ENCODE measurements at regions of chr16 and their contacts with region 1.

Region 1: DNA sequence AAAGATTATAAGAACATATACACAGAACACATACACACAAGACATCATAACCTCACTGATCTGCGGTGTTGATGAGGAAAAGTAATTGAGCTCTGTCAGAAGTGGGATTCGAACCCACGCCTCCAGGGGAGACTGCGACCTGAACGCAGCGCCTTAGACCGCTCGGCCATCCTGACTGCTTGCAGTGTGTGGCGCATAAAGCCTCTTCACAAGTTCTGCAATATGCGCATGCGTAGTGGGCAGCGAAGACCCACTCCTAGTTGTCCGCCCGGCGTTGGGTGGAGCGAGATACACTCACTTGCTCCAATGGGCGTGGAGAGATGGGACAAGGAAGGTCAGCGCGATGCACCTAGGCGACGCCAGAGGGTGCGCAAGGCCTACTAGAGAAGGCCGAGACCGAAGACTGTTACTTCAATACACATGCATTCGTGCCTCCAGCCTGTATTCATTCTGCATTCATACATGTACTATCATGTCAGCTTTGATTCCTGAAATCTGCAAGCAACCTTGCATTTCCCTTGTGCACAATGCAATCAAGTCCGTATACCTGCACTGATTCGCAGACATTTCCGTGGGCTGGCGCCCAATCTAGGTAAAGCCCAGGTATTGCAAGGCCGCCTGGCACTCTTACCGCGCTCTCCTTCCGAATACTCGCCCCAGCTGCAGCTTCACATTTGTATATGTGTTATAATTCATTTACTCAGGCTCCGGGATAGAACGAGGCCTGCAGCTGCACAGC is 16.1 kb upstream of the PLLP start:
- DNase-seq: peak; percentile 100
- H3K4me3 ChIP-seq: peak overlapping the region; percentile 84
- H3K27ac ChIP-seq: peak overlapping the region; percentile 80
- H3K4me1 ChIP-seq: peaks cover 8% of the 10 kb centered on the region
- H3K27me3 ChIP-seq: no peaks in the 10 kb centered on the region

Region 2: GRCh38 chr16:57349212-57350031 is 48.9 kb after region 1 on chr16:
- in situ Hi-C with region 1: no loop called
- DNase-seq: no peak
- H3K4me3 ChIP-seq: no peak overlapping the region
- H3K27ac ChIP-seq: no peak overlapping the region
- H3K4me1 ChIP-seq: no peaks in the 10 kb centered on the region
- H3K27me3 ChIP-seq: peaks cover 54% of the 10 kb centered on the region

Region 3: DNA sequence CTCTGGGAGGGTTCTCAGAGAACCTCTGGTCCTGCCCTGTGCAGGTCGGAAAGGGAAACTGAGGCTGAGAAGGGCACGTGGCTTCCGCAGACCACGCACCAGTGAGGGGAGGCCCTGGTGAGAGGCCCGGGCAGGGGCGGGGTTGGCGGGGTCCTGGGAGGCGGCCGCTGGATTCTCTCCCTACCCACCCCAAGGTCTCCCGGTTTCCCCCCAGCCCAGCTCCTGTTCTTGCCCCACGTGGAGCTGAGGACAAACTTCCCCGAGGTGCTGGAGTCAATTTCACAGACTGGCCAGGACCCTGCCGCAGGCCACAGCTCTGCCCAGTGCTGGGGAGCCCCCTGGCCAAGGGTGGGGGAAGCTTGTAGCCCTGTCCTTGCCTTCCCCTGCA is 115.6 kb after region 1 on chr16:
- in situ Hi-C with region 1: loop called (anchors 5 kb)
- DNase-seq: no peak
- H3K4me3 ChIP-seq: no peak overlapping the region
- H3K27ac ChIP-seq: no peak overlapping the region
- H3K4me1 ChIP-seq: 0 out of 2 replicates have a peak, but pooled peaks cover 2% of the 10 kb centered on the region
- H3K27me3 ChIP-seq: peaks cover 19% of the 10 kb centered on the region

Region 4: GRCh38 chr16:57519796-57520360 is 219.3 kb after region 1 on chr16:
- in situ Hi-C with region 1: loop called (anchors 10 kb)
- DNase-seq: peak; percentile 73
- H3K4me3 ChIP-seq: no peak overlapping the region
- H3K27ac ChIP-seq: no peak overlapping the region
- H3K4me1 ChIP-seq: no peaks in the 10 kb centered on the region
- H3K27me3 ChIP-seq: no peaks in the 10 kb centered on the region

Measured in GM23248 (cell line).